HCT116 (cell line): ENCODE measurements at regions of chr6 and their contacts with region 1.

Region 1: DNA sequence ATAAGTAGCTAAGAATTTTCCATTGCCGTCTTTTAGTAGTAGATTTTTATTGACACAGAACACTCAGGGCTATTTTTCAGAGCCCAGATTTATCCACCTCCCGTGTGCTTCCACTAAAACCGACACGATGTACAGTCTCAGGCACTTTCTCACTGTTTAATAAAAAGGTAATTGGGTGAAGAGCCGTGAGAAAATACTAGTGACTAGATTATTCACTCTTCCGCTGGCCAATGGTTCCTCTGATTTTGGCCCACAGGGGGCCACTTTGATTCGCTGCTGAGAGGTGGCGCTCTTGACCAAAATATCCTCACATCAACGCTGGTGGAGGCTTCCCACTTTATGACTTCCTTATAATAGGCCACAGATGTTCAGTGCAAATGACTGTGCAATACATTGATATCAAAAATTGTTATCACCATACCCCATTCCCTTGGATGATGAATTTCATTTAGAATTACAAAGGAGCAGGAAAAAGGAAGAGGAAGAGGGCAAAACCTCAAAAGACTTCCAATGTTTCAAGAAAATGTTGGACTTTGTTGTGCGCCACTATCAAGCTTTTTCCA is 12.3 kb upstream of the HDDC2 start:
- DNase-seq: peak; percentile 42
- ATAC-seq: peak; percentile 93
- H3K4me3 ChIP-seq: no peak overlapping the region
- H3K27ac ChIP-seq: no peak overlapping the region
- H3K4me1 ChIP-seq: no peaks in the 10 kb centered on the region
- H3K27me3 ChIP-seq: 0 out of 2 replicates have a peak, but pooled peaks cover 3% of the 10 kb centered on the region
- CTCF ChIP-seq: peak; percentile 71 to 90 (median 81)
- POLR2A ChIP-seq: no peak
- RAD21 ChIP-seq: peak; percentile 91

Region 2: DNA sequence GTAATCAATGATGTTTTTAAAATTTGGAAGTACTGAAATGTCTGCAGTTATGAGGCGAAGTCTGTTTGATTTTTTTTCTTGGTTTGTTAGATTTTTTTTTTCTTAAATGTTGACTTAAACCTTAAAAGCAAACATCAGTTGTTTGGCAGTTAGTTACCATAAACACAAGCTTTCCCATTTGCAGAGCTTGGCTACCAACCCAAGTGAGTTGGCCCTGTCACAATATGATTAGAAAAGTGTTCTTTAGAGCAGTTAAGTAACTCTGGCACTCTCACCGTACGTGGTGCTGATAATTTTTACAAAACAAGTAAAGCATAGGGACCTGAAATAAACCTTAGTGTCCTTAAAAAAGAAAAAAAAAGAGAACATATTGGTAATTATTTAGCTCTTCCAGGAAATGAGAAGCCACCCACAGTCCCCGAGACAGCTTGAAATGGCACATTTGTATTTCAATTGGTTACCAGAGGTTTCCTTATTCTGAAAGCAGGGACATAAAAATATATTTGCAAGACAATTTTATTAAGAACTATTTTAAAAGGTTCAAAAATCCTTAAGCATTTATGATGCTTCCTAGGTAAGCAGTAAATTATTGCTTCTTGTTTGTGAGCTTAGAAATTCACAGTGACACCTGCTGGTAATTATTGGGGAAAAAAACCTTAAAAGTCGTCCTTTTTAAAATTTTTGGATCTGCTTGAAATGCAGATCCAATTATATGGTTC is 439.3 kb after region 1 on chr6:
- CTCF ChIA-PET with region 1: interaction called, 49 read pairs
- POLR2A ChIA-PET with region 1: no interaction called
- RAD21 ChIA-PET with region 1: no interaction called
- intact Hi-C with region 1: loop called (anchors 2 kb)
- DNase-seq: peak; percentile 13
- ATAC-seq: no peak
- H3K4me3 ChIP-seq: no peak overlapping the region
- H3K27ac ChIP-seq: no peak overlapping the region
- H3K4me1 ChIP-seq: peaks cover 0 to 10% of the 10 kb centered on the region in 2 experiments; a peak in 2 of 4 replicates
- H3K27me3 ChIP-seq: peaks cover 47% of the 10 kb centered on the region
- CTCF ChIP-seq: peak; percentile 17 to 58 (median 34); a peak in 4 of 6 replicates
- POLR2A ChIP-seq: no peak
- RAD21 ChIP-seq: peak; percentile 43; the same call in 1 of the 2 replicates

Region 3: DNA sequence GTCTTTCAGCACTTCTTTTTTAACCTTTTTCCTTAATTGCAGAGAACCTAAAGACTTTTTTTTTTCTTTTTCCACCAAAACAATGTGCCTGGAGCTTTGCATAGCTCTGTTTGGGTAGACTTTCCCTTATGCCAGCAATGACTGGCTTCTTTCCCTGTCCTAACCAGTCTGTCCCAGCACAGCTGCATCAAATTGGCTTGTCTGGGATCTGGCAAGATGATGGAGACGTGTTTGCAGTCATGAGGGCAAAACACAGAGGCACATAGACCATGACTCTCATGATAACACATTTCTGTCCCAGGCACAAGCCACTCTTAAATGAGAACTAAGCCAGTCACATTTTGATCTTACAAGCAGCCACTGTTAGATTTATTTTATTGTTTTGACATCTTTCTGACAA is 451.8 kb after region 1 on chr6:
- CTCF ChIA-PET with region 1: interaction called, 49 read pairs
- POLR2A ChIA-PET with region 1: no interaction called
- RAD21 ChIA-PET with region 1: no interaction called
- intact Hi-C with region 1: loop called (anchors 1 kb)
- DNase-seq: no peak
- ATAC-seq: no peak
- H3K4me3 ChIP-seq: no peak overlapping the region
- H3K27ac ChIP-seq: no peak overlapping the region
- H3K4me1 ChIP-seq: no peaks in the 10 kb centered on the region
- H3K27me3 ChIP-seq: peaks cover 38% of the 10 kb centered on the region
- CTCF ChIP-seq: no peak
- POLR2A ChIP-seq: no peak
- RAD21 ChIP-seq: no peak

Region 4: GRCh38 chr6:125974214-125974866 is 660.2 kb after region 1 on chr6:
- CTCF ChIA-PET with region 1: interaction called, 9 read pairs
- POLR2A ChIA-PET with region 1: no interaction called
- RAD21 ChIA-PET with region 1: no interaction called
- intact Hi-C with region 1: loop called (anchors 5 kb)
- DNase-seq: peak; percentile 46
- ATAC-seq: peak; percentile 77
- H3K4me3 ChIP-seq: no peak overlapping the region
- H3K27ac ChIP-seq: no peak overlapping the region
- H3K4me1 ChIP-seq: no peaks in the 10 kb centered on the region
- H3K27me3 ChIP-seq: no peaks in the 10 kb centered on the region
- CTCF ChIP-seq: peak; percentile 35 to 67 (median 52); a peak in 5 of 6 replicates
- POLR2A ChIP-seq: no peak
- RAD21 ChIP-seq: peak; percentile 71